AG04449 (cell line): ENCODE measurements at regions of chr11 and their contacts with region 1.

Region 1: GRCh38 chr11:47454180-47454644 is 5.3 kb upstream of the RAPSN start:
- DNase-seq: peak; percentile 38
- H3K4me3 ChIP-seq: no peak overlapping the region
- CTCF ChIP-seq: peak; percentile 74

Region 2: DNA sequence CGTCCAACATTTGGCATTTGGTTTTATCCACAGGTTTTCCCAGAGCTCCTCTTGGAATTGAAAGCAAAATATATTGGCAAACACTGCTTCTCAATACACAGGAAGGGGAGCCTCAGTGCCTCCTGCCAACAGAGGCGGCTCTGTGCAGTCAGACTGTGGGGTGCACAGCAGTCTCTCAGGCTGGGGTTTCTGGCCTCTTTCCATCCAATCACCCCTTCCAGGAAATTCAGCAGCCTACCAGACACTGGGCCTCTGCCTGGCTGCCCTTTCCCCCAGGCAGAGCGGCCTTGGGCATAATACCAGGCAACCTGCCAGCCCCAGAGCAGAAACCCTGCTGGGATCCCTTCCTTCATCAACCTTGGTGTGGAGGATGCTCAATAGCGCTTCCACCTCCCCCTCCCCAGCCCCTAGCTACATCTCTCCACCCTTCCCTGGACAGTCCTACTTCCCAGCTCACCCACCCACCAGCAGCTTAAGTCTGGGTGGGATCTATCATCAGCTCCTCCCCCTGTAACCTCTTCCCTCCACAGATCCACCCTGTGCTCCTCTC is 12.6 kb after region 1 on chr11:
- CTCF ChIA-PET with region 1: interaction called, 37 read pairs
- POLR2A ChIA-PET with region 1: no interaction called
- DNase-seq: no peak
- H3K4me3 ChIP-seq: no peak overlapping the region
- CTCF ChIP-seq: no peak